Posterior vena cava (tissue), 2 donors: ENCODE measurements at regions of chr10 and their contacts with region 1.

Region 1: GRCh38 chr10:93254180-93254853 is 180.6 kb downstream of the CYP26A1 start:
- DNase-seq: no peak

Region 2: DNA sequence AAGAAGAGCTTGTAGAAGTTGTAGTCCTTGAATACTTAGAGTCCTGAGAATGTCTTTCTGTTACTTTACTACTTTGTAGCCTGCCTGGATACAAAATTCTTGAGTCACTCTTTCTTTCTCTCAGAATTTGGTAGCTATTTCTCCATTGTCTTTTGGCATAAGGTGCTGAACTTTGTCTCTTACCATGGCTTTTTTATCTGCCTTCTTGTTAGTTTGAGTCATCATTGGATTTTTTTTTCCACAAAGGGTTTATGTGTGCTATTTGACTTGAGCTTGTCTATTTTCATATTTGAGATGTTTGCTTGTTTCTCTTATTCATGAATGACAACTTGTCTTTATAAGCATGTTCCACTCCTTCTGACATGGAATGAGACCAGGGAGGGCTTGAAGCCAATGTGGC is 480.5 kb before region 1 on chr10:
- intact Hi-C with region 1: loop called in 1 of 2 experiments (anchors 5 kb)
- DNase-seq: no peak